ENCODE measurements at regions of chr19 and their contacts with region 1.

Region 1: DNA sequence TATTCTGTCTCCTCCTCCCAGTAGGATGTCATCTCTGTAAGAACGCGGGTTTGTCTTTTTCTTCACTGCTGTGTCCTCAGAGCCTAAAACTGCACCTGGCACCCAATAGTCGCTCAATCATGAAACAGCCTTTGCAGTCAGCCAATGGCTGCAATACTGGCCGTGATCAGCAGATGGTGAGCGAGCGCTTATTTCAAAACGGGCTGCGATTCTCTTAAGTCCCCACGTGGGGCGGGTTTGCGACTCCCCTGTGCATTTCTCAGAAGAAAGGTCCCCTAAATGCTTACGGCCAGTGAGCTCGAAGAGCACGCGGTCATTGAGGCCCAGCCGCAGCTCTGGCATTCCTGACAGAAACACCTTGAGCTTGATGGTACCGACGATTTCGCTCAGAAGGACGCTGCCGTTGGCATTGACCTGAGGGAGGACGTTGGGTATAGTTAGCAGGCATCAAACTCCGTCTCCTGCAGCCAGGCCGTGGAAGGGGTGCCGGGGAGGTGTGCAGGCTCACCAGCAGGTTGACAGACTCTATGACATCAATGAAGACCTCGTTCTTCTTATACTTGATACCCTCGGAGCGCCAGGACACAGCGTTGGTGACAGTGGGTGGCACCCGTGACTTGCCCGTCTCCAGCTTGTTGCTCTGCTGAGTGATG is 6.0 kb downstream of the AP1M2 start:
- DNase-seq: peak; percentile 91 to 92
- H3K4me3 ChIP-seq: no peak overlapping the region
- H3K27ac ChIP-seq: no peak overlapping the region
- H3K4me1 ChIP-seq: peaks cover 0 to 8% (median 6%) of the 10 kb centered on the region in 4 donors
- H3K27me3 ChIP-seq: peaks cover 0 to 3% of the 10 kb centered on the region in 2 donors
- CTCF ChIP-seq: peak; percentile 99 to 100

Region 2: DNA sequence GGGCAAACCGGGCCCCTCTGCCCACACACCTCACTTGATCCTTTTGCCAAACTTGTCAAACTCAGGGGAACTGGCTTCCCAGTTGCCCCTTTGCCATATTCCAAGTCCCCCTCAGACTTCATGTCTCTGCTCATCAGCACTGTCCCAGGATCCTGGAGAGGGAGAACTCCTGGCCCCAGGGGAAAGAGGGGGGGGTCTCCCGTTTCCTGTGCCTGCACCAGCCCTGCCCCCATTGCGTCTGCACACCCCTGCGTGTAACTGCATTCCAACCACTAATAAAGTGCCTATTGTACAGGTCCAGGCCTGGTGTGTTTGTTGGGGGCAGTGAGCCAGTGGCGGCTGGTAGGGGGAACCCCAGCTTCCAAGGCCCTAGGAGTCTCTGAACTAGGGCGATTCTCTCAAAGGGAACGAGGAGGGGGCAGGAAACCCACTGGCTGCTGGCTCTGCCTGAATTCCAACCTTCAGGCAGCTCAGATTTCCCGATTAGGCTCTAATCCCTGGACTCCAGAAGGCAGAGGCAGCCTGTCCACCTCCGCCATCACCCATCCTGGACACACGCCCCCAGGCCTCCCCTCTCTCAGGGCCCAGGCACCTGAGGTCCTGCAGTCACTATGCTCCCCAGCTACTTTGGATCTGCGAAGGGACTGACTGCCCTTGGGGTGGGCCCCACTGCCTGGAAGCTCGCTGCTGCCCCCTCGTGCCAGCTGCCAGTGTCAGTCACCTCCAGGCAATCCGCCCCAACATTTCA is 63.3 kb after region 1 on chr19:
- intact Hi-C with region 1: loop called (anchors 2 kb)
- DNase-seq: peak; percentile 82 to 90
- H3K4me3 ChIP-seq: no peak overlapping the region
- H3K27ac ChIP-seq: peak overlapping the region; percentile 52 to 55
- H3K4me1 ChIP-seq: peaks cover 0 to 31% (median 9%) of the 10 kb centered on the region in 4 donors
- H3K27me3 ChIP-seq: no peaks in the 10 kb centered on the region
- CTCF ChIP-seq: peak; percentile 86 to 97